Psoas muscle (tissue), 8 donors: ENCODE measurements at regions of chr6 and their contacts with region 1.

Region 1: DNA sequence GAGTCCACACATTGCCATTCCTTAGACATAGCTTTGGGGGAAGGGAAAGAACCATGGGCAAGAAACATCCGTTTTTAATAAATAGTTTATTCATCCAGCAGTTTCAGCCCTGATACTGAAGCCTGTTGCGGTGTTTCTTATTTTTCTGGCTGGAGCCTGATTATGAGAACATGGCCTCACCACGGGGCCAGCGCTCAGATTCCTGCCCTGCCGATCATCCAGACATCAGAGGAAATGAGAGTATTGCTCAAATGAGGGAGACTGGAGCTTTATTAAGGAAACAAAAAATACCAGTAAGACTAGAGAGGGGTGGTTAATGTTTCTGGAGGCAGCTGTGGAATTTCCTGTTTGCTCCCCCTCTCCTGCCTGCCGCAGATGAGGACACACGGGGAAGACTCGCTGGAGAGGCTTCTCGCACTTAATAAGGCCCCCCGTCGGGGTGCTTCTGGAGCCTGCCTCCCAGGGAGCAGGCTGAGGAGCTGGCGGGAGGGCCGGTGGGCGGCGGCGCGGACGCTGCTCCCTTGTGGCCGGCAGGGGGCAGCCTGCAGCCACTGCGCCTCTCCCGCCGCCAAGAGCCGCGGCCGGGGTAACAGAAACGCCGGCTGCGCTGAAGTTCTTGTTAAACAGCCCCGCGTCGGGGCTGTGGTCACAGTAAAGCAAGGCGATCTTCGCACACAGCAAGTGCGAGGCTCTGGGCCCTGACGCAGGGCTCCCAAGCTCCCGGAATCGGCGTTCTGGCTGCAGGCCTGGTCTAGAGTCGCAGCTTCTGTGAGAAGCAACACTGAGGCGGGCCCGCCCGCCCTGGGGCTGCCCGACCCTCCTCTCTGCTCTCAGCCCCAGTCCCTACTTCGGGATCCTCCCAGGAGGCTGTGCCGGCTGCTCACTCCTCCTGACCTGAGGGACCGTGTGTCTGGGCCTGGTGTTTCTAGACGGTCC is 17.5 kb downstream of the LEMD2 start:
- DNase-seq: peak; percentile 77 to 87
- ATAC-seq: peak; percentile 80 to 86 (median 84)
- H3K4me3 ChIP-seq: peak overlapping the region; percentile 12
- H3K27ac ChIP-seq: peak overlapping the region; percentile 63
- H3K4me1 ChIP-seq: peaks cover 23% of the 10 kb centered on the region
- H3K27me3 ChIP-seq: no peaks in the 10 kb centered on the region
- CTCF ChIP-seq: peak; percentile 92

Region 2: DNA sequence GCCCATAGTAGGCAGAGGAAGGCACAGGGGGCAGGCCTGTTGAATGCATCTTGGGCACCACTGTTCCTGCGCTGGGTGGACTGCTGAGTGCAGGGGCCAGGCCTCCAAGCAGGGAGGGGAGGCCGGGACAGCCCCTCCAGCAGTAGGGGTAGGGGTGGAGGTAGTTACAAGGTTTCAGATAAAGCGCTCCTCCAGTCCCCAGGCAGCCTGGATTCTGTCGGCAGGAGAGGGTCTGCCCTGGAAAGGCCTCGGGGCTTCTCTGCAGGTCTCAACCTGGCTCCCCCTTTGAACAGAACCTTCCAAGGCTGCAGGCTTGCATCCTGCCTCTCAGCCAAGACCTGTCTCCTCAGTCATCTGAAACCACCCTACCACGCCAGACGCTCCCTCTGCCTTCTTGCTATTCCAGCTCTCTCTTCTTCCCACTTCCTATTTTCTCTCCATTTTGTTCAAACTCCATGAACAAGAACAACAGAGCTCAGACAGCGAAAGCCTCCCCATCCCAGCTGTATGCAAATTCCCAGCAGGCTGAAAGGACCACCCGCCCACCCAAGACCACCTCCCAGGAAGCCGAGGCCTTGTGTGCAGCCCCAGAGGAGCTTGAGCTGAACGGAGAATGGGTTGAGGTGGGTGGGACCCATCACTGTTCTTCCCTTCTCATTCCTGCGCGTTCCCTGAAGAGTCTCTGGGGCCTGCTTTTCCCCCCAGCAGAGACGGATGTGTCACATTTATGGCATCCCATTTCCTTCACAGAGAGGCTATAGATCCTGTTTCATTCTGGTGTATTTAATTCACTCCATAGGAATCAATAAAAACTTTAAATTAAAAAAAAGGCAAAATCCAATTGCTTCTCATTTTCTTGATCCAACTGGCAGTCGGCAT is 31.0 kb after region 1 on chr6:
- intact Hi-C with region 1: no loop called
- DNase-seq: no peak
- ATAC-seq: no peak
- H3K4me3 ChIP-seq: no peak overlapping the region
- H3K27ac ChIP-seq: no peak overlapping the region
- H3K4me1 ChIP-seq: no peaks in the 10 kb centered on the region
- H3K27me3 ChIP-seq: peaks cover 0 to 20% (median 5%) of the 10 kb centered on the region in 3 donors
- CTCF ChIP-seq: no peak

Region 3: DNA sequence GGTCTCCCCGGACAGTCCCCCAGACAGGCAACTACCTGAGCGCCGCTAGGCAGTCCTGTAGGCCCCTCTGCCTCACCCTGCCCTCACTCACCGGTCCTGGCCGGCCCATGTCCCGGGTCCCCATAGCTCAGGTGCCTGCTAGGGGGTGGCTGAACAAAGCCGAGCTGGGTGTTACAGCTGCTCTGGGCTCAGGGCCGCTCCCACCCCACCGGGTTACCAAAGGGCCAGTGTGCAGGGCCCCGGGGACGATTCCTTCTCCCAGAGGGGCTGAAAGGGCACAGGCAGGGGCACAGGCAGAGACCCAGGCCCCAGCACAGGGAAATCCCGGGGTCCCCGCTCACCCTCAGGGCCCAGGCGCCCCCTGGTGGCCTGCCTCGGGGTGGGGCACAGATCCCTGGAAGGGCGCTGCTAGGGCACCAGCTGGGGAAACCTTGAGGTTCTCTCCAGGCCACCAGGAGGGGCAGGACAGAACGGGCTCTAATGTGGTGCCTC is 256.1 kb after region 1 on chr6:
- intact Hi-C with region 1: loop called (anchors 2 to 5 kb)
- DNase-seq: peak; percentile 46 to 66
- ATAC-seq: peak; percentile 70 to 86 (median 78)
- H3K4me3 ChIP-seq: no peak overlapping the region
- H3K27ac ChIP-seq: no peak overlapping the region
- H3K4me1 ChIP-seq: no peaks in the 10 kb centered on the region
- H3K27me3 ChIP-seq: peaks cover 0 to 1% (median 0%) of the 10 kb centered on the region in 3 donors
- CTCF ChIP-seq: peak; percentile 72